Naive thymus-derived CD4-positive, alpha-beta T cell (primary cell): ENCODE measurements at regions of chr17 and their contacts with region 1.

Region 1: GRCh38 chr17:58200017-58200633 is 7.6 kb downstream of the EPX start:
- DNase-seq: peak in 8 of 9 donors; percentile 20 to 56 (median 38)
- ATAC-seq: peak; percentile 87
- H3K4me3 ChIP-seq: no peak overlapping the region
- H3K4me3 Mint-ChIP-seq: no peak overlapping the region
- H3K27ac ChIP-seq: no peak overlapping the region
- H3K27ac Mint-ChIP-seq: no peak overlapping the region
- H3K4me1 ChIP-seq: no peaks in the 10 kb centered on the region
- H3K4me1 Mint-ChIP-seq: peaks cover 0 to 4% (median 0%) of the 10 kb centered on the region in 7 donors
- H3K27me3 ChIP-seq: no peaks in the 10 kb centered on the region
- H3K27me3 Mint-ChIP-seq: peaks cover 0 to 10% (median 2%) of the 10 kb centered on the region in 5 donors

Region 2: GRCh38 chr17:58249270-58250133 is 49.4 kb after region 1 on chr17:
- CTCF ChIA-PET with region 1: no interaction called
- POLR2A ChIA-PET with region 1: no interaction called
- intact Hi-C with region 1: loop called in 1 of 2 experiments (anchors 1 kb)
- DNase-seq: peak; percentile 47 to 83 (median 74)
- ATAC-seq: peak; percentile 98
- H3K4me3 ChIP-seq: peak overlapping the region; percentile 65
- H3K4me3 Mint-ChIP-seq: peak overlapping the region; percentile 58 to 87 (median 81)
- H3K27ac ChIP-seq: no peak overlapping the region
- H3K27ac Mint-ChIP-seq: no peak overlapping the region
- H3K4me1 ChIP-seq: no peaks in the 10 kb centered on the region
- H3K4me1 Mint-ChIP-seq: peaks cover 0 to 21% (median 10%) of the 10 kb centered on the region in 7 donors
- H3K27me3 ChIP-seq: no peaks in the 10 kb centered on the region
- H3K27me3 Mint-ChIP-seq: peaks cover 3 to 50% (median 14%) of the 10 kb centered on the region in 5 donors